Gastrocnemius medialis (tissue), 4 donors: ENCODE measurements at regions of chr20 and their contacts with region 1.

Region 1: GRCh38 chr20:3059489-3059888 is 11.9 kb upstream of the OXT start:
- DNase-seq: no peak
- ATAC-seq: no peak
- H3K4me3 ChIP-seq: no peak overlapping the region
- H3K27ac ChIP-seq: no peak overlapping the region
- H3K4me1 ChIP-seq: no peaks in the 10 kb centered on the region
- H3K27me3 ChIP-seq: no peaks in the 10 kb centered on the region
- CTCF ChIP-seq: no peak
- POLR2A ChIP-seq: no peak

Region 2: GRCh38 chr20:2955257-2955970 is 104.1 kb before region 1 on chr20:
- in situ Hi-C with region 1: no loop called
- intact Hi-C with region 1: no loop called
- DNase-seq: peak in 1 of 2 donors; percentile 23
- ATAC-seq: peak; percentile 75 to 80
- H3K4me3 ChIP-seq: no peak overlapping the region
- H3K27ac ChIP-seq: peak overlapping the region in 2 of 4 donors; percentile 2 to 60
- H3K4me1 ChIP-seq: peaks cover 9 to 12% of the 10 kb centered on the region in 2 donors
- H3K27me3 ChIP-seq: no peaks in the 10 kb centered on the region
- CTCF ChIP-seq: no peak
- POLR2A ChIP-seq: no peak

Region 3: DNA sequence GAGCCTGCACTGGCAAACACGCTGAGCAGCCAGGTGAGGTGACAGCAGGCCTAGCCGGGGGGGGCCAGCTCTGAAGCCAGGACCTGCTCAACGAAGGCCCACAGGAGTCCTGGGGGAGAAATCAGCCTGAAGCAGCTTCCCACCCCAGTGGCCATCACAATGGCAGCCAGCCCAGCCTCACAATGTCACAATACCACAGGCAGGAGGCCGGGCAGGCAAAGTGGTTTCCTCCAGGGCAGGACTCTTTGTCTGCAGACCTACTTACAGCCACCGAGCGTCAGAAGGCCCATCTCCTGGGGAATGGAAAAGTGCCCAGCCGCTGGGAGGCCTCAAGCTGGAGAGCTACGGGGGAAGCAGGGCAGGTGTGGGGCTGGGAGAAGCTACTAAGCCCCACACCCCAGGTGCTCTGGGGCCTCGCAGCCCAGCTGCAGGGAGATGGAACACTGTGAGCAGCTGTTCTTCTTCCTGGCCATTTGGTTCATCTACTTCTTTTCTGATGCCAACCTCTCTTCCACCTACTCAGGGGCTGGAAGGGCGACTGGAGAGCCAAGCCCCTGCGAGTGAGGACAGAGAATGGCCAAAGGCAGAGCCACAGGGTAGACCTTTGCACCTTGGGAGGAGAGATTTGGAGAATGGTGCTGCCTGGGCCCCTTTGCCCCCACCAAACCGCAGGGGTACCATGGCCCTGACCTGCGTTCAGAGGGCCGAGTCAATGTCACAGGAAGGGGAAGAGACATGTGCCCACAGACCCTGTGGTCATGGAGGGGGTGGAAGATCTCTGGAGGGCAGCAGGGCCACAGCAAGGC is 47.4 kb after region 1 on chr20:
- in situ Hi-C with region 1: loop called in 2 of 4 experiments (anchors 5 to 10 kb)
- intact Hi-C with region 1: no loop called
- DNase-seq: no peak
- ATAC-seq: no peak
- H3K4me3 ChIP-seq: no peak overlapping the region
- H3K27ac ChIP-seq: no peak overlapping the region
- H3K4me1 ChIP-seq: peaks cover 0 to 12% of the 10 kb centered on the region in 2 donors
- H3K27me3 ChIP-seq: no peaks in the 10 kb centered on the region
- CTCF ChIP-seq: no peak
- POLR2A ChIP-seq: no peak

Region 4: DNA sequence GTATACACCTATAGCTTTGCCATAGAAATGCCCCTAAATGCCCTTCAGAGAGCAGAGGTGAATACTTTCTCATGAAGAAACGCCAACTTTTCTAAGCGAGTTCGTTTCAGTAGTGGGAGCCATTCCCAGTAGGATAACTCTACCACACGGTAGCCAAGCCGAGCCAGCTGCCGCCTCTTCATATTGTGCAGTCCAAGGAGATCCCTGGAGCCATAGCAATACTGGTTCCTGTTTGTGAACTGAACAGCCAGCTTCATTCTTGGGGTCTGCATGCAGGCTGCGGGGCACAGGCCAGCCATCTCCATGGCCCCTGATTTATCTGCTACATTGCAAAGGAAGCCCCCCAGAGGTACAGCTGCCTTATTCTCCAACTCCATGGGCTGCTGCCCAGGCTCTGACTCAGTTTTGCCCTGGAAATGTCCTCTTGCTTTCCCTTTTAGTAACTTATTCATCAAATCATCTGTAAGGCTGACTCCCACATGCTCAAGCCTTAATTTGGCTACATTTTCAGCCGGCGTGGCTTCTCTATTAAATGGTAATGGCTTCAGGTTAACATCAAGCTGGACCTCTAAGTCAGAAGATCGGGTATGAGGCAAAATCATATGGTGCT is 87.3 kb after region 1 on chr20:
- in situ Hi-C with region 1: no loop called
- intact Hi-C with region 1: no loop called
- DNase-seq: peak in 1 of 2 donors; percentile 50
- ATAC-seq: peak; percentile 65 to 84
- H3K4me3 ChIP-seq: peak overlapping the region in 1 of 4 donors; percentile 33
- H3K27ac ChIP-seq: peak overlapping the region; percentile 55 to 81 (median 73)
- H3K4me1 ChIP-seq: peaks cover 28 to 39% of the 10 kb centered on the region in 2 donors
- H3K27me3 ChIP-seq: no peaks in the 10 kb centered on the region
- CTCF ChIP-seq: no peak
- POLR2A ChIP-seq: no peak